T-cell (primary cell): ENCODE measurements at regions of chr2 and their contacts with region 1.

Region 1: DNA sequence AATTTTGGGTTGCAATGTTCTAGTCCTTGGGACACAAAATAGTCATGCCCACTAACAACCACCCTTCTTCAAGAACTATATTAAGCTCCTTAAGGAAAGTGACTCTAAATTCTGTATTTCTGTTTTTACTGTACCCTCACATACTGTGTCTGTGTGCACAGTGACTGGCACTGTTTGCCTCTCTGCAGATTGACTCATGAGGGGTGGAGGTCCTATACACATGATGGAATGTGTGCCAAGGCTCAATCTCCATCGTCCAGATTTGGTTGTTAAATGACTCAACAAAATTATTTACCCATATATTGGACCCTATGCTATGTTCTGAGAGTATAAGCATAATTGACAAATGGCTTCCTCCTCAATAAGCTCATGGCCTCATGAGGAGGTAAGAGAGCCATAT is 126.6 kb upstream of the CWC22 start:
- DNase-seq: no peak
- ATAC-seq: no peak
- H3K4me3 ChIP-seq: no peak overlapping the region
- H3K4me3 Mint-ChIP-seq: no peak overlapping the region
- H3K27ac ChIP-seq: no peak overlapping the region
- H3K27ac Mint-ChIP-seq: no peak overlapping the region
- H3K4me1 ChIP-seq: no peaks in the 10 kb centered on the region
- H3K4me1 Mint-ChIP-seq: no peaks in the 10 kb centered on the region
- H3K27me3 ChIP-seq: peaks cover 0 to 4% of the 10 kb centered on the region in 2 experiments
- H3K27me3 Mint-ChIP-seq: peaks cover 7 to 18% of the 10 kb centered on the region in 2 donors

Region 2: DNA sequence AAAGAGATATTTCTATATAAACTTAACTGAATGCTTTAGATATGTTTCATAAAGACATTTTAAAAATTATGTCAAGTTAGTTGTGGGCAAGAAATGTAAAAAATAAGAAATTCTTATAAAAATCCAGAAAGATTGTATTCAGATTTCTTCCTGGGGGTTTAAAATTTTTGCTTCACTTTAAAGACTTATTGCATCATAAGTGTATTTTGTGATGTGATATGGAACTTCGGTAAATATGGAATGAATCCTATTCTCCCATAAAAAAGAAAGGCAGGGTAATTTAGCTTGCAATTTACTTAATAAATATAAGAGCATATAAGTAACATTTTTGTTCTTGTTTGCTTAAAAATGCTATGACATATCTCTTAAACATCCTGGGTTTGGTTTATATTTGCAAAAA is 21.8 kb before region 1 on chr2:
- CTCF ChIA-PET with region 1: no interaction called
- POLR2A ChIA-PET with region 1: interaction called in 1 of 2 experiments, 23 read pairs
- DNase-seq: no peak
- ATAC-seq: no peak
- H3K4me3 ChIP-seq: no peak overlapping the region
- H3K4me3 Mint-ChIP-seq: no peak overlapping the region
- H3K27ac ChIP-seq: no peak overlapping the region
- H3K27ac Mint-ChIP-seq: no peak overlapping the region
- H3K4me1 ChIP-seq: no peaks in the 10 kb centered on the region
- H3K4me1 Mint-ChIP-seq: no peaks in the 10 kb centered on the region
- H3K27me3 ChIP-seq: no peaks in the 10 kb centered on the region
- H3K27me3 Mint-ChIP-seq: peaks cover 10 to 15% of the 10 kb centered on the region in 2 donors